ENCODE measurements at regions of chr1 and their contacts with region 1.

Region 1: GRCh38 chr1:157992031-157992832 is 1.2 kb upstream of the KIRREL1 start:
- DNase-seq: peak; percentile 66
- H3K4me3 Mint-ChIP-seq: no peak overlapping the region
- H3K27ac Mint-ChIP-seq: no peak overlapping the region
- H3K4me1 Mint-ChIP-seq: peaks cover 5% of the 10 kb centered on the region
- H3K27me3 Mint-ChIP-seq: peaks cover 48% of the 10 kb centered on the region

Region 2: GRCh38 chr1:157963713-157964112 is 28.5 kb before region 1 on chr1:
- CTCF ChIA-PET with region 1: interaction called, 15 read pairs
- intact Hi-C with region 1: loop called (anchors 2 kb)
- DNase-seq: peak; percentile 74
- H3K4me3 Mint-ChIP-seq: no peak overlapping the region
- H3K27ac Mint-ChIP-seq: no peak overlapping the region
- H3K4me1 Mint-ChIP-seq: no peaks in the 10 kb centered on the region
- H3K27me3 Mint-ChIP-seq: peaks cover 5% of the 10 kb centered on the region

Region 3: DNA sequence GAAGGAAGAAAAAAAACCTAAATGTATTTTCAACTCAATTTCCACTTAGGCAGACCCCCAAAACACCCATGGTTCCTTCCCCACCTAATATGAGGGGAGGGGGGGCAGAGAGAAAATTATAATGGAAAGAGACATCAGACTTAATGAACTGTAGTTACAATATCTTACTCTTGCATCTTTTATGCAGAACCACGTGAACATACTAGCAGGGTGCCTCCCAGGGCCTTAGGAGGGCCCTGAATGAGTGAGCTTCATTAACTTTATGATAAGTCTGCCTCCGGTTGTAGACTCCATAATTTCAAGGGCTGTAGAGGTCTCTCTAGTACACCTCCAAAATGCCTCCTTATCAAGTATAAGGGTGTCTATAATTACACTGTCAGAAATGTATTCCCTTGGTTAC is 10.1 kb before region 1 on chr1:
- CTCF ChIA-PET with region 1: interaction called, 13 read pairs
- intact Hi-C with region 1: no loop called
- DNase-seq: no peak
- H3K4me3 Mint-ChIP-seq: no peak overlapping the region
- H3K27ac Mint-ChIP-seq: no peak overlapping the region
- H3K4me1 Mint-ChIP-seq: no peaks in the 10 kb centered on the region
- H3K27me3 Mint-ChIP-seq: peaks cover 22% of the 10 kb centered on the region

Region 4: GRCh38 chr1:158043232-158043631 is 51.0 kb after region 1 on chr1:
- CTCF ChIA-PET with region 1: interaction called, 54 read pairs
- intact Hi-C with region 1: no loop called
- DNase-seq: no peak
- H3K4me3 Mint-ChIP-seq: no peak overlapping the region
- H3K27ac Mint-ChIP-seq: no peak overlapping the region
- H3K4me1 Mint-ChIP-seq: no peaks in the 10 kb centered on the region
- H3K27me3 Mint-ChIP-seq: peaks cover 4% of the 10 kb centered on the region

Region 5: GRCh38 chr1:158095737-158096335 is 103.6 kb after region 1 on chr1:
- CTCF ChIA-PET with region 1: interaction called, 11 read pairs
- intact Hi-C with region 1: no loop called
- DNase-seq: peak; percentile 57
- H3K4me3 Mint-ChIP-seq: no peak overlapping the region
- H3K27ac Mint-ChIP-seq: no peak overlapping the region
- H3K4me1 Mint-ChIP-seq: no peaks in the 10 kb centered on the region
- H3K27me3 Mint-ChIP-seq: no peaks in the 10 kb centered on the region

Region 6: GRCh38 chr1:158124999-158125398 is 132.8 kb after region 1 on chr1:
- CTCF ChIA-PET with region 1: interaction called, 128 read pairs
- intact Hi-C with region 1: loop called (anchors 1 kb)
- DNase-seq: peak; percentile 86
- H3K4me3 Mint-ChIP-seq: no peak overlapping the region
- H3K27ac Mint-ChIP-seq: no peak overlapping the region
- H3K4me1 Mint-ChIP-seq: no peaks in the 10 kb centered on the region
- H3K27me3 Mint-ChIP-seq: peaks cover 23% of the 10 kb centered on the region